Aorta (tissue), 5 donors: ENCODE measurements at regions of chr1 and their contacts with region 1.

Region 1: DNA sequence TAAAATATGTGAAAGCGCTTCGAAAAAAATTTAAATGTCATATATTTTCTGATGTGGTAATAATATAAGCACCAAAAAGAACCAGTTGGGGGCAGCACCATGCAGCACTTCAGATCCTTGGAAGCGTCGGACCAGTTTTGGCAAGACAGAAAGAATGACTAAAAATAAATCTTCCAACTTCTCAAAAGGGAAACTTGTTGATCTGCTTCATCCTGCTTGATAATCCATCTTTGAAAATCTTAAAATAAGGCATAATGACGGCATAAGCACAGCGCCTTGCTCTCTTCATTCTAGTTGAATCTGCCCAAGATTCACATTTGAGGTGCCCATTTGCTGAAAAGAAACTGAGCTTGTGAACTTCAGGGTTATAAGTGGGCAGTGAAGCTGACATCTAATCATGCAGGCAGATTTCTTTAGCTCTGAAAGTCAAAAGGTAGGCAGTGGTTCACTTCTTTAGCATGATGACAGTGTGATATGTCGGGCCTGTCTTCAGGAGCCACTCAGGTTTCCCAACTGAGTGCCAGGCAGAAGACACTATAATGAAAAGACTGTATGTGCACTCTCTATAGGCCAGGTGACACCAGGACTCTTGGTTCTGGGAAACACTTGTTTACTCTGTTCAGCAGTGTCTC is 19.8 kb upstream of the MUTYH start:
- DNase-seq: peak in 1 of 2 donors; percentile 73
- ATAC-seq: peak; percentile 84
- H3K4me3 ChIP-seq: no peak overlapping the region
- H3K27ac ChIP-seq: peak overlapping the region; percentile 30 to 62
- H3K4me1 ChIP-seq: no peaks in the 10 kb centered on the region
- H3K27me3 ChIP-seq: no peaks in the 10 kb centered on the region

Region 2: DNA sequence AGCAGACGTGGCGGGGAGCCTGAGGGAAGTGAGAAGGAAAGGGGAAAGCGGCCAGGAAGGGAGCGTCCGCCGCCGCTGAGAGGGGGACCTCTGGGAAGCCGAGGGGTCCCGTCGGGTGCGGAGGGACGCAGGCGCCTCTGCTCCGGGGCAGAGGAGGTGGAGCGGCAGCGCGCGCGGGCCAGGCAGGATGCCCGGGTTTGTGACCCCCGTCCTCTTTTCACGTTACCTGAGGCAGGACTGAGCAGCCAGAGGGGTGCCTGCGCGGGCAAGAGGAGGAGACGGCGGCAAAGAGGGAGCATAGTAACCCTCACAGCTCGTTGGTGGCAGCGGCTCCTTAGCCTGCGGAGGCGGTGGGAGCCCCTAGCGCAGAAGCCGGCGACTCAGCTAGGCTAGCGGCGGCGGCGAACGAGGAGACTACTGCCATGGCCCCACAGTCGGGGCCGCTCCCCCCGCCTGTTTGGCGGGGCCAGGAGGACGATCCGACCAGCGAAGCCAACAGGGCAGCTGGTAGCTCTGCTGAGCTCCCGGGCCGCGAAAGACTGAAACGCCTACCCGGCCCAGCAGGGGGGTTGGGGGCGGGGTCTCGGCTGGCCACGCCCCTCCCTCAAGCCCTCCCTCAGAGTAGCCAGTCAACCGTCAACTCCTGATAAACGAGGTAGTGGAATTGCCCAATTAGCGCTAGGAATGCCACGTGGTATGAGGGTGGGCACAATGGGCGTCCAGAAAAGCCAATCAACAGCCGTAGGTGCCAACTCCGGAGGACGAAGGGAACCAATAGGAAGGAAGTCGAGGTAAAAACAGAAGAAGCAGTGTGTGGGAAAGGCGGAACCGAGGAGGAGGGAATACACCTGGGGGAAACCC is 130.9 kb after region 1 on chr1 and contains the start of gene TESK2:
- intact Hi-C with region 1: loop called (anchors 2 kb)
- DNase-seq: peak; percentile 97
- ATAC-seq: peak; percentile 99
- H3K4me3 ChIP-seq: peak within 1 kb of the TSS; percentile 37 to 70
- H3K27ac ChIP-seq: no peak within 1 kb of the TSS
- H3K4me1 ChIP-seq: no peaks in the 10 kb centered on the region
- H3K27me3 ChIP-seq: no peaks in the 10 kb centered on the region
- total RNA-seq, gene TESK2: 5.2 to 8.1 TPM

Region 3: GRCh38 chr1:45569962-45570581 is 210.1 kb after region 1 on chr1:
- intact Hi-C with region 1: loop called (anchors 2 to 5 kb)
- DNase-seq: peak; percentile 72 to 81
- ATAC-seq: peak; percentile 90
- H3K4me3 ChIP-seq: no peak overlapping the region
- H3K27ac ChIP-seq: peak overlapping the region in 1 of 2 donors; percentile 33
- H3K4me1 ChIP-seq: no peaks in the 10 kb centered on the region
- H3K27me3 ChIP-seq: no peaks in the 10 kb centered on the region